ENCODE measurements at regions of chr11 and their contacts with region 1.

Region 1: GRCh38 chr11:95345651-95346050 is 114.6 kb upstream of the SESN3 start:
- DNase-seq: peak; percentile 57
- H3K4me3 Mint-ChIP-seq: peak overlapping the region; percentile 48
- H3K27ac Mint-ChIP-seq: peak overlapping the region; percentile 50
- H3K4me1 Mint-ChIP-seq: peaks cover 30% of the 10 kb centered on the region
- H3K27me3 Mint-ChIP-seq: peaks cover 9% of the 10 kb centered on the region

Region 2: GRCh38 chr11:95296621-95297025 is 49.0 kb before region 1 on chr11:
- intact Hi-C with region 1: loop called (anchors 2 kb)
- DNase-seq: no peak
- H3K4me3 Mint-ChIP-seq: no peak overlapping the region
- H3K27ac Mint-ChIP-seq: no peak overlapping the region
- H3K4me1 Mint-ChIP-seq: peaks cover 33% of the 10 kb centered on the region
- H3K27me3 Mint-ChIP-seq: peaks cover 4% of the 10 kb centered on the region

Region 3: GRCh38 chr11:95443386-95443785 is 97.7 kb after region 1 on chr11:
- intact Hi-C with region 1: loop called (anchors 10 kb)
- DNase-seq: peak; percentile 66
- H3K4me3 Mint-ChIP-seq: no peak overlapping the region
- H3K27ac Mint-ChIP-seq: no peak overlapping the region
- H3K4me1 Mint-ChIP-seq: peaks cover 13% of the 10 kb centered on the region
- H3K27me3 Mint-ChIP-seq: no peaks in the 10 kb centered on the region

Region 4: GRCh38 chr11:95705485-95706124 is 360.0 kb after region 1 on chr11:
- intact Hi-C with region 1: loop called (anchors 1 kb)
- DNase-seq: peak; percentile 96
- H3K4me3 Mint-ChIP-seq: no peak overlapping the region
- H3K27ac Mint-ChIP-seq: no peak overlapping the region
- H3K4me1 Mint-ChIP-seq: peaks cover 17% of the 10 kb centered on the region
- H3K27me3 Mint-ChIP-seq: no peaks in the 10 kb centered on the region